ENCODE measurements at regions of chr11 and their contacts with region 1.

Region 1: DNA sequence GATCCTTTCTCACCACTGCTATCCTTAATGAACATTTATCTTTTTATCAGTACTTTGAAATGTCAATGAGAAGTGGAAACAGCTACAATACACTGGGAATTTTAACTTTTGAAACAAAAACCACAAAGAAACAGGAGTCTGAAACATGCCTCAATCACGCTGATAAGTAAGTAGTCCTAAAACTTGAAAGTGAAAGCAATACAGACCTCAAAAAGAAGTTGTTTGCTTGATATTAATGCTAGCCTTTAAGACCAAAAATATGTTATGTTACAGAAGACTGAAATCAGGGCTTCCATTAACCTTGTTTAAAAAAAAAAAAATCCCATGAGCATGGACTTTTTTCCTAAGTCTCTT is 21.3 kb downstream of the PHF21A start:
- DNase-seq: no peak
- H3K4me3 ChIP-seq: no peak overlapping the region
- H3K27ac ChIP-seq: no peak overlapping the region
- H3K4me1 ChIP-seq: no peaks in the 10 kb centered on the region
- H3K27me3 ChIP-seq: no peaks in the 10 kb centered on the region
- CTCF ChIP-seq: no peak
- POLR2A ChIP-seq: no peak

Region 2: GRCh38 chr11:46039990-46040389 is 60.0 kb before region 1 on chr11:
- CTCF ChIA-PET with region 1: no interaction called
- POLR2A ChIA-PET with region 1: no interaction called
- dilution Hi-C with region 1: no loop called
- intact Hi-C with region 1: loop called (anchors 10 kb)
- DNase-seq: no peak
- H3K4me3 ChIP-seq: no peak overlapping the region
- H3K27ac ChIP-seq: no peak overlapping the region
- H3K4me1 ChIP-seq: no peaks in the 10 kb centered on the region
- H3K27me3 ChIP-seq: no peaks in the 10 kb centered on the region
- CTCF ChIP-seq: no peak
- POLR2A ChIP-seq: no peak

Measured in endothelial cell of umbilical vein (primary cell).